GM23248 (cell line): ENCODE measurements at regions of chr4 and their contacts with region 1.

Region 1: GRCh38 chr4:174365018-174365587 is 81.4 kb downstream of the CEP44 start:
- DNase-seq: peak; percentile 64
- H3K4me3 ChIP-seq: no peak overlapping the region
- H3K27ac ChIP-seq: no peak overlapping the region
- H3K4me1 ChIP-seq: no peaks in the 10 kb centered on the region
- H3K27me3 ChIP-seq: no peaks in the 10 kb centered on the region

Region 2: DNA sequence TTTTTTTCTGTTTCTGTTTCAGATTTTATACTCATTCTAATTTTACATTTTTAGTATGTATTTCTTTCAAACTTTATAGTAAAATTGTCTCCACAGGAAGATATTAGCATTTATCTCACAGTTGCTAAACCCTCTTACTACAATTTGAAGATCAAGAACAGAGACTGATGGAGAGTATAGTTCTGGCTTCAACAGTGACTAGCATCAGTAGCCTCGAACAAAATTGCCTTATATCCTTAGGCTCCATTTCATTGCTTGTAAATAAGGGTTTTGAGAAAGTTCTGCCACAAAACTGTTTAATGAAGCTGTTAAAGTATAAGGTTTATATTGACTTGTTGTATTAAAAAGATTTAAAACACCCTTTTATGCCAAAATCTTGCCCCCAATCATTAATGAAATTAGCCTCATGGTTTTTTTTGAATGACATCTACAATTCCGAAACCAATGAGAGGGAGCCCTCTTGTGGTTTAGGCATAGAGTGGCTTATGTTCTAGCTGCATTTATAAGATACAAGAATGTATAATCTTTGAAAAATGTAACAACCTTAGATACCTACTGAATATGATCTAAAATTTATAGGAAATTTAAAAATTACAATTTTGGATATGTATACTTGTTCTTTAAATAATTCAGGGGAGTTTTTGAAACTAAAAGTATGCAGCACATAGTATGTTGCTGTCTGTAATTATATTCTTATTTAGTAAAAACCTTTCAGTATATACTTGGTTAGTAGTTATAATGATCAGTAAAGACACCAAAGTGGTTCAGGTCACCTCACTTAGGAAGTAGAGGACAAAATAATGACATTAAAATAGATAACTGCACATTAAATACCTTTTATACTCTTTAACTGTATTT is 267.0 kb after region 1 on chr4:
- in situ Hi-C with region 1: loop called (anchors 10 kb)
- DNase-seq: peak; percentile 69
- H3K4me3 ChIP-seq: no peak overlapping the region
- H3K27ac ChIP-seq: no peak overlapping the region
- H3K4me1 ChIP-seq: peaks cover 12% of the 10 kb centered on the region; the same call in 1 of the 2 replicates
- H3K27me3 ChIP-seq: no peaks in the 10 kb centered on the region

Region 3: DNA sequence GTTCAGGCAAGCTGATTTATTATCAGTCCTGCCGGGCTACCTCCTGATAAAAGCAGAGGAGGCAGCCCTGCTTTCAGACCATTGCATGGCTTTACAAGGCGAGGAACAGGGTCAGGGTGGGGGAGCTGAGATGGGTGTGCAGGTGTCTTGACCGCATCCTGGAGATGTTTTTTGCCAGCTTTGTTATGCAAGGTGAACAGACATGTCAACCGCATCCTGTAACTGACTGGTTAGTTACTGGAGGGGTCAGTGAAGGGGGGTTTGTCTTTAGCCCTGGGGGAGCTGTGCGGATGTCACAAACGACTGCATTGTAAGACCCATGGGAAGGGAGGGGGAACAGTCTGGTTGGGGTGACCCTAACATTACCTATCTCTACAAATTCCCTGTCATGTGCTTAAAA is 563.1 kb after region 1 on chr4:
- in situ Hi-C with region 1: no loop called
- DNase-seq: no peak
- H3K4me3 ChIP-seq: no peak overlapping the region
- H3K27ac ChIP-seq: no peak overlapping the region
- H3K4me1 ChIP-seq: no peaks in the 10 kb centered on the region
- H3K27me3 ChIP-seq: no peaks in the 10 kb centered on the region

Region 4: GRCh38 chr4:175536852-175537453 is 1171.8 kb after region 1 on chr4:
- in situ Hi-C with region 1: loop called (anchors 25 kb)
- DNase-seq: peak; percentile 75
- H3K4me3 ChIP-seq: 0 out of 2 replicates have a peak overlapping the region, but pooled peaks have one; percentile 1
- H3K27ac ChIP-seq: no peak overlapping the region
- H3K4me1 ChIP-seq: peaks cover 5% of the 10 kb centered on the region; the same call in 1 of the 2 replicates
- H3K27me3 ChIP-seq: no peaks in the 10 kb centered on the region